ENCODE measurements at regions of chr4 and their contacts with region 1.

Region 1: DNA sequence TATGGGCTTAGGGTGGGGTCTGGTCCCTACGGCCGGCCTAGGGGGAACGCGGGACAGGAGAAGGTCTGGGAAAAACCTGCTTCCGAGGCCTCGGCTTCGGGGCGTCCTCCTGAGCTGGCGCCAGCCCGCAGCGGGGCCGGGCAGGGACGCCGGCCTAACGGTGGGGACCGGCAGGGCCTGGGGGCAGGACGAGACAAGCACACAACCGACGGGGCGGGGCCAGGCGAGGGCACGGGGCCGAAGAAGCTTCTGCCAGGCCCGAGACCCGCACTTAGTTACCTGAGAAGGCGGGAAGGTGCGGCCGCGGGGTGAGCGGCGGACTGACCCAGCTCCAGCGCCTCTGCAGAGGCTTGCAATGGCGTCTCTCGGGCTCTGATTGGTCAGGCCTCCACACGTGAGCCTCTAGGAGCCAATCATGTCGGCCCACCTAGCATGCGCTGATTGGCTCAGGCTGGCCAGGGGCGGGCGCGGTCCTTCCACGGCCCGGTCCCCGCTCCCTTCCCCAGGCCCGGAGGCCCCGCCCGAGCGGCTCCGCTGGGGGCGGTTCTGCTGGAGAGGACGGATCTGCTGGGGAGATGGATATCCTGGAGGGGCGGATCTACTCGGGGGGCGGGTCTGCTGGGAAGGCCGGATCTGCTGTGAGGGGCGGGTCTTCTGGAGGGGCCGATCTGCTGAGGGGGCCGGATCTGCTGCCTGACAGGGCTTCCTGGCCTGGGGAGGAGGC is 44.3 kb downstream of the CPLX1 start:
- DNase-seq: peak; percentile 99
- ATAC-seq: peak; percentile 96
- H3K4me3 Mint-ChIP-seq: peak overlapping the region; percentile 82
- H3K27ac Mint-ChIP-seq: peak overlapping the region; percentile 93
- H3K4me1 Mint-ChIP-seq: peaks cover 50% of the 10 kb centered on the region
- H3K27me3 Mint-ChIP-seq: peaks cover 15% of the 10 kb centered on the region

Region 2: GRCh38 chr4:337143-337931 is 444.3 kb before region 1 on chr4 and contains the start of gene ZNF141:
- CTCF ChIA-PET with region 1: no interaction called
- POLR2A ChIA-PET with region 1: no interaction called
- intact Hi-C with region 1: loop called in 1 of 2 experiments (anchors 2 kb)
- DNase-seq: peak; percentile 95
- ATAC-seq: peak; percentile 96
- H3K4me3 Mint-ChIP-seq: peak within 1 kb of the TSS; percentile 99
- H3K27ac Mint-ChIP-seq: peak within 1 kb of the TSS; percentile 100
- H3K4me1 Mint-ChIP-seq: peaks cover 24% of the 10 kb centered on the region
- H3K27me3 Mint-ChIP-seq: no peaks in the 10 kb centered on the region
- total RNA-seq, gene ZNF141: 26.5 to 35.3 TPM

Region 3: GRCh38 chr4:674172-675035 is 107.3 kb before region 1 on chr4 and contains the starts of genes ATP5ME and MYL5:
- CTCF ChIA-PET with region 1: no interaction called
- POLR2A ChIA-PET with region 1: no interaction called
- intact Hi-C with region 1: loop called (anchors 1 to 5 kb)
- DNase-seq: peak; percentile 98
- ATAC-seq: peak; percentile 95
- H3K4me3 Mint-ChIP-seq: peak within 1 kb of the TSS; percentile 80
- H3K27ac Mint-ChIP-seq: peak within 1 kb of the TSS; percentile 84
- H3K4me1 Mint-ChIP-seq: peaks cover 13% of the 10 kb centered on the region
- H3K27me3 Mint-ChIP-seq: no peaks in the 10 kb centered on the region
- total RNA-seq, gene ATP5ME: 147 to 210 TPM
- total RNA-seq, gene MYL5: 13.7 to 16.4 TPM

Region 4: DNA sequence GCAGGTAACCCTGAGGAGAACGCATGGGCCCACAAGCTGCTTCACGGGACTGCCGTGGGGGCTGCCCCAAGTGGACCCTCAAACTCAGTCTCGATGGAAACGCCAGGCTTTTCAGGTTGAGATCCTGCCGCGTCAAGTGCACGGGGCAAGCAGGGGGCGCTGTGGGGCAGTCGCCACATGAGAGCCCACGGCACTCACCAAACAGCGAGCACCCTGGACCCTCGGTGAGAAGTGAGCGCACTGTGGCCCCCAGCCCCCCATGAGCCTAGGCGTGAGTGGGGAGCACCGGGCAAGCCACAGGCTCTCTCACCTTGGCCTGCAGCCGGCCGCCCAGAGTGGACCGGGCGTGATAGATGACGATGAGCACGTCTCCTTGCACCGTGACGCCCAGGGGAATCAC is 95.1 kb after region 1 on chr4:
- CTCF ChIA-PET with region 1: no interaction called
- POLR2A ChIA-PET with region 1: no interaction called
- intact Hi-C with region 1: loop called (anchors 2 to 5 kb)
- DNase-seq: peak; percentile 30
- ATAC-seq: no peak
- H3K4me3 Mint-ChIP-seq: no peak overlapping the region
- H3K27ac Mint-ChIP-seq: no peak overlapping the region
- H3K4me1 Mint-ChIP-seq: peaks cover 28% of the 10 kb centered on the region
- H3K27me3 Mint-ChIP-seq: no peaks in the 10 kb centered on the region

Region 5: GRCh38 chr4:986879-987623 is 205.4 kb after region 1 on chr4 and contains the start of gene IDUA:
- CTCF ChIA-PET with region 1: interaction called, 3 read pairs
- POLR2A ChIA-PET with region 1: interaction called, 4 read pairs
- intact Hi-C with region 1: loop called in 1 of 2 experiments (anchors 1 kb)
- DNase-seq: peak; percentile 93
- ATAC-seq: peak; percentile 82
- H3K4me3 Mint-ChIP-seq: peak within 1 kb of the TSS; percentile 85
- H3K27ac Mint-ChIP-seq: peak within 1 kb of the TSS; percentile 88
- H3K4me1 Mint-ChIP-seq: peaks cover 13% of the 10 kb centered on the region
- H3K27me3 Mint-ChIP-seq: no peaks in the 10 kb centered on the region
- total RNA-seq, gene IDUA: 6.4 to 9.0 TPM

Region 6: GRCh38 chr4:1099684-1100335 is 318.2 kb after region 1 on chr4:
- CTCF ChIA-PET with region 1: no interaction called
- POLR2A ChIA-PET with region 1: no interaction called
- intact Hi-C with region 1: no loop called
- DNase-seq: no peak
- ATAC-seq: no peak
- H3K4me3 Mint-ChIP-seq: no peak overlapping the region
- H3K27ac Mint-ChIP-seq: no peak overlapping the region
- H3K4me1 Mint-ChIP-seq: no peaks in the 10 kb centered on the region
- H3K27me3 Mint-ChIP-seq: no peaks in the 10 kb centered on the region

Region 7: GRCh38 chr4:1346781-1347409 is 565.2 kb after region 1 on chr4 and contains the start of gene UVSSA:
- CTCF ChIA-PET with region 1: no interaction called
- POLR2A ChIA-PET with region 1: interaction called, 3 read pairs
- intact Hi-C with region 1: loop called in 1 of 2 experiments (anchors 1 kb)
- DNase-seq: peak; percentile 100
- ATAC-seq: peak; percentile 95
- H3K4me3 Mint-ChIP-seq: peak within 1 kb of the TSS; percentile 86
- H3K27ac Mint-ChIP-seq: peak within 1 kb of the TSS; percentile 87
- H3K4me1 Mint-ChIP-seq: peaks cover 47% of the 10 kb centered on the region
- H3K27me3 Mint-ChIP-seq: no peaks in the 10 kb centered on the region
- total RNA-seq, gene UVSSA: 14.8 to 18.1 TPM

Region 8: DNA sequence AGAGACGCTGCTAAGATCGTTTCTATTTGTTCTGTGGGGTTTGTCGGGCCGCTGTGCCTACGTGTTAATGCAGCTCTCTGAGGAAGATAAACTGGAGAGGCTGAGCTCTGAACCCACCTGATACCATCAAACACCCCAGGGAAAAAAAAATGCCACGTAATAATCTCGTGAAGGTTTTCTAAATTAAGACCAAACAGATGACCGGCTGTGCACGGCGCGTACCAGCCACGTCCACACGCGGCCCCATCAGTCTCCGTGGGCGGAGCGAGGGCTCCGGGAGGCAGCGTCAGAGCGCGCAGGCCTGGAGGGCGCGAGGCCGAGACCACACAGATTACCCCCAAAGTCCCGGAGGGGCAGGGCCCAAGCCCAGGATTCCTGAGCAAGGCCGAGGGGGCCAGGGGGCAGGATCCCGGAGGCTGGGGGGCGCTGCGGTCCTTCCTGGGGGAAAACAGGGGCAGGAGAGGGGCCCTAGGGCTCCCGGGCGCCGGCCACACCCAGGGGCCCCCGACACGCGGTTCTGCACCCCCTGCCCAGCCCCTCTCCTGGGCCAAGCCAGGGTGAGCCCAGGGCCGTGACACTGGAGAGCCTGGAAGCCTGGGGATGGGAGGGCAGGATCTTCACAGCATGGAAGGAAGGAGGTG is 810.5 kb after region 1 on chr4:
- CTCF ChIA-PET with region 1: no interaction called
- POLR2A ChIA-PET with region 1: no interaction called
- intact Hi-C with region 1: no loop called
- DNase-seq: no peak
- ATAC-seq: no peak
- H3K4me3 Mint-ChIP-seq: no peak overlapping the region
- H3K27ac Mint-ChIP-seq: no peak overlapping the region
- H3K4me1 Mint-ChIP-seq: no peaks in the 10 kb centered on the region
- H3K27me3 Mint-ChIP-seq: peaks cover 4% of the 10 kb centered on the region

Measured in activated CD4-positive, alpha-beta T cell treated with anti-CD3 and anti-CD28 coated beads for 36 hours (primary cell).